Dendritic cell treated with granulocyte-macrophage colony-stimulating factor and Interleukin-4, amounts not matched to agents 40 ng/mL and 50 ng/mL, for 4 days (primary cell): ENCODE measurements at regions of chr9 and their contacts with region 1.

Region 1: DNA sequence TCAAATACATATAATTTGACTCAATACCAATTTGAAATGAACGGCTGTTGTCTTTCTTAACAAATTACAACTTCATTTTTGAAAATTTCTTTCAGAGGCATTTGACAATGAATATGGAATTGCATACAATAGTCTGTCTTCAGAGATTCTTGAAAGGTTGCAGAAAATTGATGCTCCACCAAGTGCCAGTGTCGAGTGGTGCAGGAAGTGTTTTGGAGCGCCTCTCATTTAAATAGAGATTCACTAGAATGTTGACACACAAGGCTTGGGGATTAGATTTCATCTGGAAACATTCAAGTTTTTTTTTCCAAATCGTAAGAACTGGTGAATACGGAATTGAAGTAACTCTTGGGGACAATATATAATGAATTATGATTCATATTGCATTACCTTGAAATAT is 8.1 kb downstream of the RPS6 start:
- H3K4me3 Mint-ChIP-seq: no peak overlapping the region
- H3K27ac Mint-ChIP-seq: no peak overlapping the region
- H3K4me1 Mint-ChIP-seq: peaks cover 7% of the 10 kb centered on the region
- H3K27me3 Mint-ChIP-seq: no peaks in the 10 kb centered on the region

Region 2: DNA sequence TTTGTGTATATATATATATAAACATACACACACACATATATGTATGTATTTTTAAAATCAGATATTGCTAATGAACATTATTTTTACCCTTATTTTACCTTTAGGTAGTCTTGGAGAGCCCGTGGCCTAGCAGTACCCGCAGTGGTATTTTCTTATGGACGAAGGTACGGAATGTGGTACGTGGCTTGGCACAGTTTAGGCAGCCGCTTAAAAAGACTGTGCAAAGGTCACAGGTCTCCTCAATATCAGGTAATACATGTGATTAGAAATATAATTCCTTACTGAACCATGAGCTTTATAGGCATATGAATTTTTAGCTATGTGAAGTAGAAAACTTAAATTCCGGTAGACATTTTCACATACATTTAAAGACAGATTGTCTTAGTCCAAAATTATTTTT is 35.8 kb before region 1 on chr9:
- intact Hi-C with region 1: loop called (anchors 5 kb)
- H3K4me3 Mint-ChIP-seq: no peak overlapping the region
- H3K27ac Mint-ChIP-seq: no peak overlapping the region
- H3K4me1 Mint-ChIP-seq: no peaks in the 10 kb centered on the region
- H3K27me3 Mint-ChIP-seq: no peaks in the 10 kb centered on the region

Region 3: DNA sequence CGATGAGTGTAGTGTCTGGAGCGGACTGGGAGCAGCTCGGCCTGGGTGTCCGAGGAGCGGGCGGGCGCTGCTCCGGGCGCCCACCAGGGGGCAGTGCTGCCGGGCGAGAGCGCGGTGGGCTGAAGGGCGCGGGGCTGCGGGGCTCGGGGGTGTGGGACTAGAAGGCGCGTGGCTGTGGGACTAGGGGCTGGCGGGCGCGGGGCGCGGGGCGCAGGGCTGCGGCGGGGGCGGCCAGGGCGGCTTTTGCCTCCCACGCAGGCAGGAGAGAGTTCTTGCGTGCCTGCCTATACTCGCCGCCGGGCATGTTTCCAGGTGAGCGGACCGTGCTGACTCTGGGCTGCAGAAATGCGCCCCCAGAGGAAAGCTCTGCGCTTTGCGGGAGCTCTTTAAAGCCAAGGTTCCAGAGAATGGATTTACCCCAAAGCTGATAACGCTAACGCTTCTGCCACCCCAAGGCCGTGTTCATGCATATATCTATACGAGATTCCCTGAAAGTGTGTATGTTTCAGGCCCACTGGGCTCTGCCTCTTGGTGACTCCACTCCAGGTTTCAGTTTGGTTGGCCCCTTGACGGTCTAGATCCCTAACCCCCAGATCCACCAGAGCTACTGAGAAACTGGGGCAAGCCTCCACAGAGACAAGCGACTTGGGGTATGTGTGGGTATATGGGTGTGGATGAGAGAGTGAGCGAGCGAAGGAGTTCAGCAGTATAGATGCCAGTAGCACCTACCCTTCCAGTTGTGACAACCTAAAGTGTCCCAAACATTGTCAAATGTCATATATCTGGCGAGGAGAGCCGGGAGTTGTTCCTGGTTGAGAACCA is 93.0 kb after region 1 on chr9:
- intact Hi-C with region 1: no loop called
- H3K4me3 Mint-ChIP-seq: peak overlapping the region; percentile 61
- H3K27ac Mint-ChIP-seq: no peak overlapping the region
- H3K4me1 Mint-ChIP-seq: peaks cover 7% of the 10 kb centered on the region
- H3K27me3 Mint-ChIP-seq: peaks cover 16% of the 10 kb centered on the region